PC-3 (cell line): ENCODE measurements at regions of chr10 and their contacts with region 1.

Region 1: DNA sequence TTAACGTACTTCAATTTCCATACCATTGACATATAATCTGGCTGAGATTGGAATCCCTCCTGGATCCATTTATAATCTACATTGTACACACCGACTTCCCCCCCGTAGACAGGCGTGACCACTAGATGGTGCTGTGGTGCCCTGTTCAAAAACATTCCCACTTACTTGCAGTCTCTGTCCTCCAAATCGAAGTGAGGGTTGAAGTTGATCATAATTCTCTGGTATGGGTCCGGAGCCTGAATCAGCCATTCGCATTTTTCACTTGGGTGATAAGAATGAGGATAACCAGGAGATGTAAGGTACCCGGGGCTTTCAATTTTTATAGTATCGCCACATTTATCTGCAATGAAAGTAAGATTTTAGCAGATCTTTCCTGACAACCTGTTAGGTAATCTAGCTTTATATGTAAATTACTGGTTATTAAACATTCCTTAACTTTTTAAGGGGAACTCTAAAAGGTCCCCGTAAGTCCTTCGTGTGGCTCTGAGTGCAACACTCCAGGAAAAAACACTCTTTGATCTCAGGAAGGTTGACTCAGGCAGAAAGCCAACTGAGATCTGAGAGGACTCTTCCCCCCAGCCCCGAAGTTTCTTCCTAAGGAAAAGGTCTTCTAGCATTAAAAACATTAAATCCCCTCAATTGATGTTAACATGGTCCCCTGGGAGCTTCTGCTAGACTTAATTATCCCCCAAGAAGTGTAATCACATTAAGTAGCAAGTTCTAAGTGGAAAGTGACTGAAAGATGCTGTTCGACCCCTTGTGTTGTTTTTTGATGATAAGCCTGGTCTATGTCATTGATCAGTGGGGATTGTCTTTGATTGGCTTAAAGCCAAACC is 3.7 kb downstream of the NRP1 start:
- DNase-seq: peak; percentile 100
- ATAC-seq: peak; percentile 21
- H3K4me3 ChIP-seq: peak overlapping the region; percentile 69
- H3K27ac ChIP-seq: peak overlapping the region; percentile 86
- H3K4me1 ChIP-seq: peaks cover 46% of the 10 kb centered on the region
- H3K27me3 ChIP-seq: no peaks in the 10 kb centered on the region
- CTCF ChIP-seq: peak; percentile 100

Region 2: GRCh38 chr10:33155720-33156638 is 174.8 kb before region 1 on chr10:
- CTCF ChIA-PET with region 1: no interaction called
- POLR2A ChIA-PET with region 1: no interaction called
- intact Hi-C with region 1: loop called (anchors 1 kb)
- DNase-seq: peak; percentile 100
- ATAC-seq: peak; percentile 90
- H3K4me3 ChIP-seq: peak overlapping the region; percentile 15
- H3K27ac ChIP-seq: peak overlapping the region; percentile 65
- H3K4me1 ChIP-seq: peaks cover 36% of the 10 kb centered on the region
- H3K27me3 ChIP-seq: no peaks in the 10 kb centered on the region
- CTCF ChIP-seq: no peak

Region 3: DNA sequence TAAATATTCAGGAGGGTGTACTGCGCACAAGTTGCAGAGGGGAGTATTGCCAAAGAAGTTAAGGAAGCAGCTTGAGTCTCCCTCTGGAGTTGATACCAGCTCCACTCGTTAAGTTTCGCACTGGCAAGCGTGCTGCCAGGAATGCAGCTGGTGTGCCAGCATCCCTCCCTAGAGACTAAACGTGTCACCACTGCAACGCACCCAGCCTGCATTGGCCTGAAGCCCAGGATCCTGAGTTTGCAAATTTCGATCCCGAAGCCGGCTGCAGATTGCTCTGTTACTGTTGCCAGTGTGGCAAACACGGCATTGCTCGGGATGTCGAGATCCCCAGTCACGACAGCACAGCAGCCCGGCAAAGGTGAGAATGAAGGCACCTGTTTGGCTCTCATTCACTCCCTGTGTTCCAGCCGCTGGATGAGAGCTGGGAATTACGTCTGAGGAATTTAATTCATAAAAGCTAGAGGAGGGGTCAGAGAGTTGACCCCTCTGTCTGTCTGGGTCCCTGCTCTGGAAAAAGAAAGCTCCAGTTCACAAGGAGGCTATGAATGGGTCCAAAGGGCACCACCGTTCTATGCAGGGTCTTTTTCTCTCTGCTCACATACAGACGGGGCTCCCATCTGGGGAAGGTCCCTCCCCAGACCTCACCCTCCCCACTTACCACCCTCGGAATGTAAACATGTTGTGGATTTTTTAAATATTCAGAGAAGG is 57.3 kb before region 1 on chr10:
- CTCF ChIA-PET with region 1: no interaction called
- POLR2A ChIA-PET with region 1: interaction called, 5 read pairs
- intact Hi-C with region 1: loop called (anchors 2 kb)
- DNase-seq: peak; percentile 100
- ATAC-seq: peak; percentile 87
- H3K4me3 ChIP-seq: peak overlapping the region; percentile 47
- H3K27ac ChIP-seq: peak overlapping the region; percentile 71
- H3K4me1 ChIP-seq: peaks cover 66% of the 10 kb centered on the region
- H3K27me3 ChIP-seq: no peaks in the 10 kb centered on the region
- CTCF ChIP-seq: no peak

Region 4: GRCh38 chr10:33509231-33509831 is 178.6 kb after region 1 on chr10:
- CTCF ChIA-PET with region 1: no interaction called
- POLR2A ChIA-PET with region 1: no interaction called
- intact Hi-C with region 1: no loop called
- DNase-seq: peak; percentile 100
- ATAC-seq: peak; percentile 97
- H3K4me3 ChIP-seq: peak overlapping the region; percentile 41
- H3K27ac ChIP-seq: peak overlapping the region; percentile 65
- H3K4me1 ChIP-seq: peaks cover 28% of the 10 kb centered on the region
- H3K27me3 ChIP-seq: no peaks in the 10 kb centered on the region
- CTCF ChIP-seq: no peak

Region 5: GRCh38 chr10:33801748-33802147 is 471.0 kb after region 1 on chr10:
- CTCF ChIA-PET with region 1: interaction called, 4 read pairs
- POLR2A ChIA-PET with region 1: interaction called, 4 read pairs
- intact Hi-C with region 1: loop called (anchors 1 kb)
- DNase-seq: peak; percentile 100
- ATAC-seq: peak; percentile 77
- H3K4me3 ChIP-seq: no peak overlapping the region
- H3K27ac ChIP-seq: peak overlapping the region; percentile 61
- H3K4me1 ChIP-seq: peaks cover 55% of the 10 kb centered on the region
- H3K27me3 ChIP-seq: no peaks in the 10 kb centered on the region
- CTCF ChIP-seq: no peak

Region 6: GRCh38 chr10:33955676-33956075 is 624.9 kb after region 1 on chr10:
- CTCF ChIA-PET with region 1: no interaction called
- POLR2A ChIA-PET with region 1: no interaction called
- intact Hi-C with region 1: no loop called
- DNase-seq: peak; percentile 37
- ATAC-seq: no peak
- H3K4me3 ChIP-seq: no peak overlapping the region
- H3K27ac ChIP-seq: no peak overlapping the region
- H3K4me1 ChIP-seq: peaks cover 10% of the 10 kb centered on the region; the same call in 1 of the 2 replicates
- H3K27me3 ChIP-seq: no peaks in the 10 kb centered on the region
- CTCF ChIP-seq: no peak

Region 7: GRCh38 chr10:34078745-34079470 is 748.1 kb after region 1 on chr10:
- CTCF ChIA-PET with region 1: no interaction called
- POLR2A ChIA-PET with region 1: no interaction called
- intact Hi-C with region 1: loop called (anchors 1 kb)
- DNase-seq: no peak
- ATAC-seq: no peak
- H3K4me3 ChIP-seq: no peak overlapping the region
- H3K27ac ChIP-seq: no peak overlapping the region
- H3K4me1 ChIP-seq: no peaks in the 10 kb centered on the region
- H3K27me3 ChIP-seq: no peaks in the 10 kb centered on the region
- CTCF ChIP-seq: no peak

Region 8: DNA sequence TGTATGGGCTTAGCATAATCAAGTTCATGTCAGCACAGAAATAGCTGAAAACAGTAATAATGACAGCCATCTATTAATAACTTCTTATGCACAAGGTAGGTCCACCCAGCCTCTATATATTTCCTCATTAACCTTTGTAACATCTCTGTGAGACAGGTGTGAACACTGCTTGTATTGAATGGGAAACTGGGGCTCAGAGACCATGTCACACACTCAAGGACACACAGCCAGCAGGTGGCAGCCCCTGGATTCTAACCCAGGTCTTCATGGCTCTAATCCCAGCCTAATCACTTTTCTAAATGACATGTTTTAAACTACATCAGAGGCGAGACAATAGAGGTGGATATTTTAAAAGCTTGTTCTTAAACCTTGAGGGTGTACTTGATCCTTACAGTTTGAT is 892.9 kb after region 1 on chr10:
- CTCF ChIA-PET with region 1: interaction called, 12 read pairs
- POLR2A ChIA-PET with region 1: interaction called, 8 read pairs
- intact Hi-C with region 1: loop called (anchors 2 kb)
- DNase-seq: peak; percentile 35
- ATAC-seq: peak; percentile 18; the same call in 1 of the 2 replicates
- H3K4me3 ChIP-seq: no peak overlapping the region
- H3K27ac ChIP-seq: no peak overlapping the region
- H3K4me1 ChIP-seq: peaks cover 11% of the 10 kb centered on the region; the same call in 1 of the 2 replicates
- H3K27me3 ChIP-seq: no peaks in the 10 kb centered on the region
- CTCF ChIP-seq: peak; percentile 78

Region 9: GRCh38 chr10:34584164-34584563 is 1253.4 kb after region 1 on chr10:
- CTCF ChIA-PET with region 1: no interaction called
- POLR2A ChIA-PET with region 1: no interaction called
- intact Hi-C with region 1: loop called (anchors 5 kb)
- DNase-seq: peak; percentile 72
- ATAC-seq: no peak
- H3K4me3 ChIP-seq: no peak overlapping the region
- H3K27ac ChIP-seq: no peak overlapping the region
- H3K4me1 ChIP-seq: peaks cover 74% of the 10 kb centered on the region
- H3K27me3 ChIP-seq: no peaks in the 10 kb centered on the region
- CTCF ChIP-seq: no peak